GM12878 (cell line): ENCODE measurements at regions of chr9 and their contacts with region 1.

Region 1: GRCh38 chr9:131621551-131622358 is 76.4 kb downstream of the PRRT1B start:
- DNase-seq: peak; percentile 73
- ATAC-seq: peak; percentile 76
- H3K4me3 ChIP-seq: peak overlapping the region; percentile 16; the same call in 1 of the 2 replicates
- H3K27ac ChIP-seq: peak overlapping the region; percentile 89
- H3K4me1 ChIP-seq: peaks cover 32% of the 10 kb centered on the region
- H3K27me3 ChIP-seq: no peaks in the 10 kb centered on the region
- CTCF ChIP-seq: peak in 2 of 3 experiments; percentile 7 to 12; a peak in 1 of 6 replicates
- EP300 ChIP-seq: peak; percentile 7 to 44; a peak in 1 of 4 replicates
- POLR2A ChIP-seq: peak; percentile 71
- RAD21 ChIP-seq: no peak

Region 2: GRCh38 chr9:131590908-131591844 is 30.6 kb before region 1 on chr9:
- CTCF ChIA-PET with region 1: interaction called, 15 read pairs
- POLR2A ChIA-PET with region 1: no interaction called
- RAD21 ChIA-PET with region 1: interaction called, 8 read pairs
- SMC1A ChIA-PET with region 1: interaction called, 5 read pairs
- in situ Hi-C with region 1: no loop called
- intact Hi-C with region 1: no loop called
- DNase-seq: peak; percentile 21
- ATAC-seq: peak; percentile 98
- H3K4me3 ChIP-seq: no peak overlapping the region
- H3K27ac ChIP-seq: no peak overlapping the region
- H3K4me1 ChIP-seq: no peaks in the 10 kb centered on the region
- H3K27me3 ChIP-seq: no peaks in the 10 kb centered on the region
- CTCF ChIP-seq: peak; percentile 73 to 97 (median 86)
- EP300 ChIP-seq: no peak
- POLR2A ChIP-seq: 0 out of 2 replicates have a peak, but pooled peaks have one; percentile 53
- RAD21 ChIP-seq: peak; percentile 78

Region 3: DNA sequence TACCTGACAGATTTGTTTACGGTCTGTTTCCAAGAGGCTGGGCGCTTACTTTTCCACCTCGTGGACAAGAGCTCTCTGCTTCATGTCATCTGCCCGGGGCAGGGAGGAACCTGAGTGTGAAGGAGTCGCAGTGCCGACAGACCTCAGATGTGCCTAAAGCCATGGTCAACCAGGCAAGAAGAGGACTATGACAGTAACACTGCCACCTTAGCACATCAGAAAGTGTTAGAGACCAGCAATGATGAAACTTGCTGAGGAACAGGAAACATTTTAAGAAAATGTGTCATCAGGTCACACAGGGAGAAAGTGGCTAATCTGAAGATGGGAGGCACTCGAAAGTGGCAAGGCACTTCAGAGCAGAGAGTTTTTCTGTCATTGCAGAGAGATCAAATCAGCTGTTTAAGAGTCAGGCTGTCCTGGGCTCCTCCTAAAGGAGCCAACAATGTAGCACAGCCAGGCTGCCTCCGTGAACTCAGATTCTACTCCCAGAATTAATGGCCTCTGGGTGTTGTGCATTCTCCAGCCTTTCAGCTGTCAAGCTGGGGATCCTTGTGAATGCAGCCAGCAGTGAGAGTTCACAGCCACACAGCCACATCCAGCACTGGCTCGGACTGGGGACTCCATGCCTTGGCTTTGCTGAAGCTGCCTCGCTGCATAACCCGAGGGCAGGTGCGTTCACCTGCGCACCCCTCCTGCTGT is 23.5 kb after region 1 on chr9:
- CTCF ChIA-PET with region 1: interaction called, 9 read pairs
- POLR2A ChIA-PET with region 1: interaction called, 10 read pairs
- RAD21 ChIA-PET with region 1: interaction called, 16 read pairs
- SMC1A ChIA-PET with region 1: interaction called, 50 read pairs
- in situ Hi-C with region 1: no loop called
- intact Hi-C with region 1: no loop called
- DNase-seq: no peak
- ATAC-seq: peak; percentile 68
- H3K4me3 ChIP-seq: no peak overlapping the region
- H3K27ac ChIP-seq: peak overlapping the region; percentile 20
- H3K4me1 ChIP-seq: peaks cover 28% of the 10 kb centered on the region
- H3K27me3 ChIP-seq: no peaks in the 10 kb centered on the region
- CTCF ChIP-seq: no peak
- EP300 ChIP-seq: no peak
- POLR2A ChIP-seq: no peak
- RAD21 ChIP-seq: no peak

Region 4: DNA sequence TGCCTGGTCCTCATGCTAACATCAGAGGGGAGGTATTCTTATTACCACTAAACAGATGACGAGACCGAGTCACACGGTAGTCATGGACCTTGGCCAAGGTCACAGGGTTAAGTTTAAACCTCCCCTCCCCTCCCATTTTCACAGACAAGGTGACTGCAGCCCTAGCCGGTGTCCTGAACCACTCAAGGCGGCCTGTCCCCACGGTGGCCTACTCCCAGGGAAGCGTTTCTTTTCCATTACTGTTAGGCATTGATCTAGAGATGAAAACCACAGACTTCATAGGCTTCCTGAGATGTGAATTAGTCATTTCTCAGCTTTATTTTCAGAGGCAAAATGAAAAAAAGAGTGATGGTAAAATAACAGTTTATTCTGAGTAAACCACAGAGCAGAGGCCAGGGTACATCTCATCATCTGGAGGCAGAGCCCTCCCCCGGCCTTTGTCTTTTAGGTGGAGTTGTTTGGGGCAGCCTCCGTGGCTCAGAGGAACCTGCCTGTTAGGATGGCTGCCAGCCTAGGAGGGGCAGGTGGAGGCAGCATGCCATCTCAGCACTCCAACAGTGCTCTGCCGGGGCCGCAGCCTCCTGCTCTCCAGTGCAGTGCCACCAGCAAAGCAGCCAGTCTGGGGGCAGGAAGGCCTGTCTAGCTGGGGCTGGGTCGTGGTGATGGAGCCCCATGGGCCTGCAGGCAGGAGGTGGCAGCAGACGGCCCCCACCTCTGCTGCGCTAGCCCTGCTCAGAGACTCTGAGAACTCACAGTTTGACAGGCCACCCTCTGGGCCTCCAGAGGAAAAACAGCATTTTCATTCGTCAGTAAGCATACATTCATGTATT is 46.9 kb after region 1 on chr9:
- CTCF ChIA-PET with region 1: interaction called, 11 read pairs
- POLR2A ChIA-PET with region 1: interaction called, 7 read pairs
- RAD21 ChIA-PET with region 1: interaction called, 32 read pairs
- SMC1A ChIA-PET with region 1: interaction called, 11 read pairs
- in situ Hi-C with region 1: no loop called
- intact Hi-C with region 1: no loop called
- DNase-seq: peak; percentile 62
- ATAC-seq: peak; percentile 74
- H3K4me3 ChIP-seq: peak overlapping the region; percentile 54
- H3K27ac ChIP-seq: peak overlapping the region; percentile 88
- H3K4me1 ChIP-seq: peaks cover 72% of the 10 kb centered on the region
- H3K27me3 ChIP-seq: no peaks in the 10 kb centered on the region
- CTCF ChIP-seq: peak; percentile 3 to 5 (median 4); a peak in 1 of 6 replicates
- EP300 ChIP-seq: peak; percentile 25 to 47; a peak in 2 of 4 replicates
- POLR2A ChIP-seq: peak; percentile 11; the same call in 1 of the 2 replicates
- RAD21 ChIP-seq: no peak; the same call in 1 of the 2 replicates

Region 5: GRCh38 chr9:131697097-131697496 is 75.3 kb after region 1 on chr9:
- CTCF ChIA-PET with region 1: interaction called, 3 read pairs
- POLR2A ChIA-PET with region 1: no interaction called
- RAD21 ChIA-PET with region 1: no interaction called
- SMC1A ChIA-PET with region 1: interaction called, 16 read pairs
- in situ Hi-C with region 1: no loop called
- intact Hi-C with region 1: no loop called
- DNase-seq: no peak
- ATAC-seq: no peak
- H3K4me3 ChIP-seq: no peak overlapping the region
- H3K27ac ChIP-seq: no peak overlapping the region
- H3K4me1 ChIP-seq: peaks cover 30% of the 10 kb centered on the region
- H3K27me3 ChIP-seq: no peaks in the 10 kb centered on the region
- CTCF ChIP-seq: no peak
- EP300 ChIP-seq: no peak
- POLR2A ChIP-seq: no peak
- RAD21 ChIP-seq: no peak

Region 6: DNA sequence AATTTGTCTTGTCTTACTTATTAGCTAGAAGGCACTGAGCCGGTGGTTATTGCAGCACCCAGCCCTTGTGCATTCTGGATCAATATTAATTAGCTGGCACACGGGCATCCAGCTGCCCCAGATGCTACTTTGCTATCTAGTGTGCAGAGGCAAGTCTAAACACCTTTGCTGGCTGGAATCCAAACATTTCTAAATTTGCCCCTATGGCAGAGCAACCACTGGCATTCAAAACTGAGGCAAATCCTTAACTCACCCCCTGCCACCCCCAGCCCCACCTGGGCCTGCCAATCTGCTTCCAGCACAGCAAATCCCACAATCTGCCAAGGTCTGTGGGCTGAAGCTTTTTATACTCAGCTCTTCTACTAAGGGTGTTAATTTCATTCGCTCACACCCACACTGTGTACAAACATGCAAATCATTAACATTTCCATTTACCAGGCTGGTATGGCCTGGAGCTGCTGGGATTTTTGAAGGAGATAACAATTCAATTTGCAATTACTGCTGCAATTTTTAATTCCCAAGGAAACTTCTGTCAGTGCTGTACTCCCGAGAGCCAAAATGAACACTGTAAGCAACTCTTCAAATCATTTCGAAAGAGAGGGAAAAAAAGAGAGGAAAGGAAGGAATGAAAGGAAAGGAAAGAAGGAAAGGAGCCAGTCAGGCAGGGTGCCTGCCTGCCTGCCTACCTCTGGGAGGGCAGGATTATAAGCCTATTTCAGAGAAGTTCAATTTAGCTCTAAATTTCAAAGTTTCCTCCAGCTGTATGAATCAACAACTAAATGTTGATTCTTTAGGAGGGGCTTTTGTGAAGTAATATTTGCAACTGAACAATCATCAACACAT is 82.6 kb after region 1 on chr9:
- CTCF ChIA-PET with region 1: interaction called, 3 read pairs
- POLR2A ChIA-PET with region 1: interaction called, 16 read pairs
- RAD21 ChIA-PET with region 1: interaction called, 21 read pairs
- SMC1A ChIA-PET with region 1: interaction called, 19 read pairs
- in situ Hi-C with region 1: no loop called
- intact Hi-C with region 1: loop called (anchors 1 kb)
- DNase-seq: no peak
- ATAC-seq: peak; percentile 12; the same call in 1 of the 3 replicates
- H3K4me3 ChIP-seq: no peak overlapping the region
- H3K27ac ChIP-seq: peak overlapping the region; percentile 83
- H3K4me1 ChIP-seq: peaks cover 63% of the 10 kb centered on the region
- H3K27me3 ChIP-seq: no peaks in the 10 kb centered on the region
- CTCF ChIP-seq: no peak
- EP300 ChIP-seq: no peak
- POLR2A ChIP-seq: no peak
- RAD21 ChIP-seq: no peak

Region 7: GRCh38 chr9:131709771-131710454 is 88.2 kb after region 1 on chr9:
- CTCF ChIA-PET with region 1: interaction called, 3 read pairs
- POLR2A ChIA-PET with region 1: interaction called, 16 read pairs
- RAD21 ChIA-PET with region 1: interaction called, 21 read pairs
- SMC1A ChIA-PET with region 1: interaction called, 19 read pairs
- in situ Hi-C with region 1: no loop called
- intact Hi-C with region 1: loop called (anchors 1 kb)
- DNase-seq: peak; percentile 77
- ATAC-seq: peak; percentile 76
- H3K4me3 ChIP-seq: peak overlapping the region; percentile 57
- H3K27ac ChIP-seq: peak overlapping the region; percentile 83
- H3K4me1 ChIP-seq: peaks cover 60% of the 10 kb centered on the region
- H3K27me3 ChIP-seq: no peaks in the 10 kb centered on the region
- CTCF ChIP-seq: 0 out of 6 replicates have a peak, but pooled peaks of 1 of the 3 experiments have one; percentile 8
- EP300 ChIP-seq: peak in 1 of 2 experiments; percentile 82; a peak in 3 of 4 replicates
- POLR2A ChIP-seq: no peak
- RAD21 ChIP-seq: no peak

Region 8: GRCh38 chr9:132365986-132366385 is 744.2 kb after region 1 on chr9:
- CTCF ChIA-PET with region 1: no interaction called
- POLR2A ChIA-PET with region 1: no interaction called
- RAD21 ChIA-PET with region 1: no interaction called
- SMC1A ChIA-PET with region 1: no interaction called
- in situ Hi-C with region 1: no loop called
- intact Hi-C with region 1: no loop called
- DNase-seq: no peak
- ATAC-seq: no peak
- H3K4me3 ChIP-seq: no peak overlapping the region
- H3K27ac ChIP-seq: no peak overlapping the region
- H3K4me1 ChIP-seq: no peaks in the 10 kb centered on the region
- H3K27me3 ChIP-seq: no peaks in the 10 kb centered on the region
- CTCF ChIP-seq: no peak
- EP300 ChIP-seq: no peak
- POLR2A ChIP-seq: no peak
- RAD21 ChIP-seq: no peak